Lower leg skin (tissue), 4 donors: ENCODE measurements at regions of chr6 and their contacts with region 1.

Region 1: DNA sequence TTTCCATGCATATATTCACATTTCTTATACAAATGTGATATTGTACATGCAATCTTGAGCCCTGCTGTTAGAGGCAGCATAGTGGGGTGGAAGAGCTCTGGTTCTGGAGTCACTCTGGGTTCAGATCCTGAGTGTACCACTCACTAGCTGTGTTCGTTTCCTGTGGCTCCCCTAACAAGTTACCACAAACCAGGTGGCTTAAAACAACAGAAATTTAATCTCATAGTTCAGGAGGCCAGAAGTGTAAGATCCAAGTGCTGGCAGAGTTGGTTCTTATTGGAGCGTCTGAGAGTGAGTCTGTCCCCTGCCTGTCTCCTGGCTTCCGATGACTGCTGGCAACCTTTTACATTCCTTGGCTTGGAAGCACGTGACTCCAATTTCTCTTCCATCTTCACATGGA is 115.6 kb downstream of the MAP3K7 start:
- DNase-seq: no peak
- H3K4me3 ChIP-seq: no peak overlapping the region
- CTCF ChIP-seq: no peak
- POLR2A ChIP-seq: no peak

Region 2: GRCh38 chr6:90251295-90251992 is 219.8 kb before region 1 on chr6:
- intact Hi-C with region 1: no loop called
- DNase-seq: no peak
- H3K4me3 ChIP-seq: no peak overlapping the region
- CTCF ChIP-seq: no peak
- POLR2A ChIP-seq: no peak

Region 3: DNA sequence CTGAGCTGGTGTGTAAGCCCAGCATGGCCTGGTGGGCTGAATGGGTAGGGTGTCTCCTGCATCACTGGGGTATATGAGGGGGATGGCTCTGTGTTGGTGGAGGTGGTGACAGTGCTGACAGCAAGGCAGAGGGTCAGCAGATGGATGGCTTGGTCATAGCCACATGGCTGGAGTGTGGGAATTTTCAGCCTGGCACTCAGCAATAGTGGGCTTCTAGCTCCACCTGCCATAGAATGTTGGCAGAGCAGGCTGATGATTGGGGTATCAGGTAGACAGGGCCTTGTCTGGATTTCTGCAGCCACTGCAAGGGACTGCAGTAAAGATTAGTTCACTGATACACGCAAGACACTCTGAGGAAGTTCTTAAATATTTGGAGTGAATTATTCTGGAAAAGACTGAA is 37.2 kb before region 1 on chr6:
- intact Hi-C with region 1: loop called (anchors 1 kb)
- DNase-seq: no peak
- H3K4me3 ChIP-seq: no peak overlapping the region
- CTCF ChIP-seq: no peak
- POLR2A ChIP-seq: no peak

Region 4: GRCh38 chr6:90533615-90534336 is 62.5 kb after region 1 on chr6:
- intact Hi-C with region 1: no loop called
- DNase-seq: no peak
- H3K4me3 ChIP-seq: no peak overlapping the region
- CTCF ChIP-seq: no peak
- POLR2A ChIP-seq: no peak